Sciatic nerve (tissue), 2 donors: ENCODE measurements at regions of chrX and their contacts with region 1.

Region 1: GRCh38 chrX:41145920-41146608 is 60.8 kb downstream of the USP9X start:
- DNase-seq: no peak
- ATAC-seq: no peak

Region 2: DNA sequence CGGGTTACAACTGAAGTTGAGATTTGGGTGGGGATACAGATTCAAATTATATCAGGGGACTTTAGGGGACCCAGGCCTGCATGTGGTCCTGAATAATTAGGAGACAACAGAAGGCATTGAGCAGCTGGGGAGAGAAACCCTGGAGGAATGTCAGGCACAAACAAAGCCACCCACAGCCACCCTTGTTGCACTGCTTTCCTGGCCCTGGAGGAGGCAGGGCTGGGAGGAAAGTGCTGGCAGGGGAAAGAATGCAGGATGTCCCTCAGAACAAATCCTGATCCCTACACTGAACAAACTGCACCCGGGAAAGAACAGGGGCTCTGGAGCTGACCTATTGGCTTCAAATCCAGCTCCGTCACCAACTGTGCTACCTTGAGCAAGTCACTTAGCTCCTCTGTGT is 779.4 kb before region 1 on chrX:
- intact Hi-C with region 1: no loop called
- DNase-seq: no peak
- ATAC-seq: no peak

Region 3: GRCh38 chrX:41127477-41128192 is 18.4 kb before region 1 on chrX:
- intact Hi-C with region 1: loop called (anchors 1 kb)
- DNase-seq: no peak
- ATAC-seq: no peak